ENCODE measurements at regions of chr13 and their contacts with region 1.

Region 1: GRCh38 chr13:33723772-33724435 is 94.0 kb upstream of the RFC3 start:
- DNase-seq: peak; percentile 83
- ATAC-seq: peak; percentile 99
- H3K4me3 ChIP-seq: no peak overlapping the region; a peak in 1 of 6 replicates
- H3K27ac ChIP-seq: peak overlapping the region; percentile 28
- H3K4me1 ChIP-seq: peaks cover 28% of the 10 kb centered on the region
- H3K27me3 ChIP-seq: no peaks in the 10 kb centered on the region
- CTCF ChIP-seq: peak; percentile 95
- EP300 ChIP-seq: no peak
- POLR2A ChIP-seq: no peak
- RAD21 ChIP-seq: peak; percentile 88

Region 2: GRCh38 chr13:32650705-32651311 is 1073.1 kb before region 1 on chr13:
- CTCF ChIA-PET with region 1: no interaction called
- POLR2A ChIA-PET with region 1: no interaction called
- in situ Hi-C with region 1: no loop called
- intact Hi-C with region 1: no loop called
- DNase-seq: peak; percentile 73
- ATAC-seq: peak; percentile 92
- H3K4me3 ChIP-seq: no peak overlapping the region
- H3K27ac ChIP-seq: no peak overlapping the region
- H3K4me1 ChIP-seq: peaks cover 8% of the 10 kb centered on the region; the same call in 1 of the 2 replicates
- H3K27me3 ChIP-seq: no peaks in the 10 kb centered on the region
- CTCF ChIP-seq: peak; percentile 83
- EP300 ChIP-seq: no peak
- POLR2A ChIP-seq: no peak
- RAD21 ChIP-seq: peak; percentile 21; the same call in 1 of the 2 replicates

Region 3: GRCh38 chr13:33228648-33229445 is 495.1 kb before region 1 on chr13:
- CTCF ChIA-PET with region 1: interaction called, 8 read pairs
- POLR2A ChIA-PET with region 1: no interaction called
- in situ Hi-C with region 1: loop called (anchors 10 kb)
- intact Hi-C with region 1: loop called (anchors 1 kb)
- DNase-seq: peak; percentile 62
- ATAC-seq: peak; percentile 57
- H3K4me3 ChIP-seq: peak overlapping the region; percentile 2 to 52 (median 5); a peak in 3 of 6 replicates
- H3K27ac ChIP-seq: peak overlapping the region; percentile 96
- H3K4me1 ChIP-seq: peaks cover 55% of the 10 kb centered on the region
- H3K27me3 ChIP-seq: no peaks in the 10 kb centered on the region
- CTCF ChIP-seq: peak; percentile 76
- EP300 ChIP-seq: no peak
- POLR2A ChIP-seq: no peak
- RAD21 ChIP-seq: peak; percentile 80

Region 4: GRCh38 chr13:33446821-33447725 is 276.8 kb before region 1 on chr13:
- CTCF ChIA-PET with region 1: no interaction called
- POLR2A ChIA-PET with region 1: no interaction called
- in situ Hi-C with region 1: no loop called
- intact Hi-C with region 1: loop called (anchors 5 kb)
- DNase-seq: no peak
- ATAC-seq: no peak
- H3K4me3 ChIP-seq: no peak overlapping the region
- H3K27ac ChIP-seq: no peak overlapping the region
- H3K4me1 ChIP-seq: peaks cover 14% of the 10 kb centered on the region
- H3K27me3 ChIP-seq: no peaks in the 10 kb centered on the region
- CTCF ChIP-seq: no peak
- EP300 ChIP-seq: no peak
- POLR2A ChIP-seq: no peak
- RAD21 ChIP-seq: no peak

Region 5: GRCh38 chr13:33610471-33611015 is 113.4 kb before region 1 on chr13:
- CTCF ChIA-PET with region 1: interaction called, 3 read pairs
- POLR2A ChIA-PET with region 1: no interaction called
- in situ Hi-C with region 1: loop called (anchors 10 kb)
- intact Hi-C with region 1: loop called (anchors 1 kb)
- DNase-seq: peak; percentile 95
- ATAC-seq: peak; percentile 94
- H3K4me3 ChIP-seq: peak overlapping the region; percentile 55 to 70 (median 59)
- H3K27ac ChIP-seq: peak overlapping the region; percentile 99
- H3K4me1 ChIP-seq: peaks cover 62% of the 10 kb centered on the region
- H3K27me3 ChIP-seq: no peaks in the 10 kb centered on the region
- CTCF ChIP-seq: peak; percentile 58
- EP300 ChIP-seq: no peak
- POLR2A ChIP-seq: peak; percentile 66 to 72
- RAD21 ChIP-seq: peak; percentile 52

Region 6: GRCh38 chr13:33642374-33643068 is 81.4 kb before region 1 on chr13:
- CTCF ChIA-PET with region 1: no interaction called
- POLR2A ChIA-PET with region 1: interaction called, 5 read pairs
- in situ Hi-C with region 1: no loop called
- intact Hi-C with region 1: loop called (anchors 1 kb)
- DNase-seq: peak; percentile 99
- ATAC-seq: peak; percentile 97
- H3K4me3 ChIP-seq: peak overlapping the region in 2 of 3 experiments; percentile 27 to 45; a peak in 3 of 6 replicates
- H3K27ac ChIP-seq: peak overlapping the region; percentile 97
- H3K4me1 ChIP-seq: peaks cover 90% of the 10 kb centered on the region
- H3K27me3 ChIP-seq: no peaks in the 10 kb centered on the region
- CTCF ChIP-seq: no peak
- EP300 ChIP-seq: peak; percentile 94 to 98
- POLR2A ChIP-seq: peak in 1 of 2 experiments; percentile 57; a peak in 2 of 4 replicates
- RAD21 ChIP-seq: no peak

Region 7: DNA sequence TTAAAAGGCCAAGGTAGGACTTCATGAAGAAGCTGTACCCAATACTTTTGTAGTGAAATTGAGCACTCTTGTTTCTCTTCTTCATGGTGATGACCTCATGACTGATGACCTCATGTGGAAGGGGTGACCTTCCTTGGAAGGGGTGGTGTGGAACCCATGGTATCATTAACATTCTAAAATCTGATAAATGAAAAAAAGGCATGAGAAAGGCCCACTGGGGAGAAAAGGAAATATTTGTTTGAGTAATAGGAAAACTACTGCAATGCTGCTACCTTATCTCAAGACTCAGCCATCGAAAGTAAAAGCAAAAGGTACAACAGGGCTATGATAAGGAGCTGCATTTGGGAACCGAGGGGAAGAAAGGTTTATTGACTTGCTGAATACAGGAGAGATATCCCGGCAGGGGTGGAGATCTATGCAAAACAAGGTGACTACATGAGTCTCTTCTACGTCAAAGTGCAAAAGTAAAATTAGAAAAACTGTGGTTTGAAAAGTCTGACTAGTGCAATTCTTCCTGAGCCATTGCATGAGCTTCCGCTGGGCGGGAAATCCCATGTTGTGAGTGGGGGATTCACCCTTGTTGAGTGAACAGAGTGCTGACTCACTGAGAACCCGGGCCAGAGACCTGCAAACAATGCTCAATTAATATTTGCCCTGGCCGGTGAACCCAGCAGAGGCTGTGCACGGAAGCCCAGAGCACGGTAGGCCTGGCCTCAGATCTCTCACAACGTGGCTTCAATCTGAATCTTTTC is 44.8 kb before region 1 on chr13:
- CTCF ChIA-PET with region 1: no interaction called
- POLR2A ChIA-PET with region 1: no interaction called
- in situ Hi-C with region 1: no loop called
- intact Hi-C with region 1: loop called (anchors 1 kb)
- DNase-seq: peak; percentile 97
- ATAC-seq: peak; percentile 97
- H3K4me3 ChIP-seq: peak overlapping the region; percentile 26 to 62 (median 52); a peak in 5 of 6 replicates
- H3K27ac ChIP-seq: peak overlapping the region; percentile 99
- H3K4me1 ChIP-seq: peaks cover 85% of the 10 kb centered on the region
- H3K27me3 ChIP-seq: no peaks in the 10 kb centered on the region; a peak in 2 of 5 replicates
- CTCF ChIP-seq: 0 out of 2 replicates have a peak, but pooled peaks have one; percentile 4
- EP300 ChIP-seq: peak; percentile 20 to 85; a peak in 2 of 4 replicates
- POLR2A ChIP-seq: peak; percentile 81 to 88
- RAD21 ChIP-seq: peak; percentile 41

Measured in HepG2 (cell line).